ENCODE measurements at regions of chrX and their contacts with region 1.

Region 1: GRCh38 chrX:108091266-108091877 is at the starts of genes ATG4A and PSMD10:
- DNase-seq: peak; percentile 65 to 91 (median 85)
- ATAC-seq: peak; percentile 97
- H3K4me3 ChIP-seq: peak within 1 kb of the TSS; percentile 85
- H3K4me3 Mint-ChIP-seq: no peak within 1 kb of the TSS
- H3K27ac ChIP-seq: peak within 1 kb of the TSS; percentile 88
- H3K27ac Mint-ChIP-seq: no peak within 1 kb of the TSS
- H3K4me1 ChIP-seq: no peaks in the 10 kb centered on the region
- H3K4me1 Mint-ChIP-seq: peaks cover 0 to 28% (median 15%) of the 10 kb centered on the region in 7 donors
- H3K27me3 ChIP-seq: no peaks in the 10 kb centered on the region
- H3K27me3 Mint-ChIP-seq: no peaks in the 10 kb centered on the region
- total RNA-seq, gene ATG4A: 6.7 to 11.4 (median 7.5) TPM
- total RNA-seq, gene PSMD10: 17.6 to 36.8 (median 22.1) TPM

Region 2: DNA sequence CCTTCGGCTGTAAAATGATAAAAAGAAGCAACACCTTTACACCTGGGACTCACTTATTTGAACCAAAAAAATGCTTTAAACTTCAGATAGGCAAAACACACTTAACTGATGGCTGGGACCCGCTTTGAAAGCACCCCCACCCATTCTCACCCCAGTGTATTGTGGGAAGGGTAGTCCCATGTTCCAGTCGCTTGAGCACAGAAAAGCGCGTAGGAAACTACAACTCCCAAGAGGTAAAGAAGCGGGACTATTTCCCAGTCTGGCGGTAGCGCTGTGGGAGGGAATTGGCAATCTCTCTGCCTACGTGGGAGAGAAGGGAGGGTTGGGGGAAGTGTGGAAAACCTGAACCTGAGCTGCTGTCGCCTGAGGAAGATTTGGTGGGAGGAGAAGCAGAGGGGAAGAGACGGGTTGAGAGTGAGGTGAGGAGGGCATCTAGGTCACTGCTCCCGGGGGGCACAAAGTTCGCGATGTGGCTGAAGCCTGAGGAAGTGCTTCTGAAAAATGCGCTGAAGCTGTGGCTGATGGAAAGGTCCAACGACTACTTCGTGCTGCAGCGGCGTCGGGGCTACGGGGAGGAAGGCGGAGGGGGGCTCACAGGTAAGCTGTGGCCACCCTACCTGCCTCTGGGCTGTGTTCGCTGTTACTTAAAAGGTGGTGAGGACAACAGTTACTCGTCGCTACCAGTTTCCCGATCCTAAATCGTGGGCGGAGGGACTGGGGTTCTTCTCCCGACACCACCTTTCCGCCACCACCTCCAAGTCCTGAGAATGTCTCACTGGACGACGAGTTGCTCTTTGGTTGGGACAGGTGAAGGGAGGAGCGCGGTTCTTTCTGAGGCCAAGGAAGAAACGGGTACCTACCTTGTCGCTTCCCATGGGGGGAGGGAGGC is 1288.7 kb before region 1 on chrX and contains the start of gene TBC1D8B:
- CTCF ChIA-PET with region 1: no interaction called
- POLR2A ChIA-PET with region 1: no interaction called
- intact Hi-C with region 1: loop called in 1 of 2 experiments (anchors 2 kb)
- DNase-seq: peak in 6 of 9 donors; percentile 2 to 19 (median 6)
- ATAC-seq: peak; percentile 88
- H3K4me3 ChIP-seq: peak within 1 kb of the TSS; percentile 51
- H3K4me3 Mint-ChIP-seq: peak within 1 kb of the TSS; percentile 77 to 94 (median 85)
- H3K27ac ChIP-seq: no peak within 1 kb of the TSS
- H3K27ac Mint-ChIP-seq: peak within 1 kb of the TSS in 3 of 9 donors; percentile 46 to 74 (median 55)
- H3K4me1 ChIP-seq: no peaks in the 10 kb centered on the region
- H3K4me1 Mint-ChIP-seq: peaks cover 5 to 16% (median 11%) of the 10 kb centered on the region in 7 donors
- H3K27me3 ChIP-seq: peaks cover 0 to 5% of the 10 kb centered on the region in 2 donors
- H3K27me3 Mint-ChIP-seq: peaks cover 20 to 39% (median 23%) of the 10 kb centered on the region in 5 donors
- total RNA-seq, gene TBC1D8B: 0.24 to 2.1 (median 0.71) TPM

Region 3: GRCh38 chrX:108138814-108139702 is 47.7 kb after region 1 on chrX:
- CTCF ChIA-PET with region 1: no interaction called
- POLR2A ChIA-PET with region 1: no interaction called
- intact Hi-C with region 1: loop called in 1 of 2 experiments (anchors 5 kb)
- DNase-seq: peak in 1 of 9 donors; percentile 1
- ATAC-seq: no peak
- H3K4me3 ChIP-seq: no peak overlapping the region
- H3K4me3 Mint-ChIP-seq: no peak overlapping the region
- H3K27ac ChIP-seq: no peak overlapping the region
- H3K27ac Mint-ChIP-seq: no peak overlapping the region
- H3K4me1 ChIP-seq: no peaks in the 10 kb centered on the region
- H3K4me1 Mint-ChIP-seq: no peaks in the 10 kb centered on the region
- H3K27me3 ChIP-seq: no peaks in the 10 kb centered on the region
- H3K27me3 Mint-ChIP-seq: no peaks in the 10 kb centered on the region